Activated naive CD4-positive, alpha-beta T cell treated with anti-CD3 and anti-CD28 coated beads for 36 hours (primary cell): ENCODE measurements at regions of chr12 and their contacts with region 1.

Region 1: GRCh38 chr12:9760699-9761418 is at the start of gene CD69:
- DNase-seq: peak; percentile 88
- H3K4me3 Mint-ChIP-seq: peak within 1 kb of the TSS; percentile 95
- H3K27ac Mint-ChIP-seq: peak within 1 kb of the TSS; percentile 99
- H3K4me1 Mint-ChIP-seq: peaks cover 36% of the 10 kb centered on the region
- H3K27me3 Mint-ChIP-seq: no peaks in the 10 kb centered on the region
- total RNA-seq, gene CD69: 150 to 153 TPM

Region 2: GRCh38 chr12:9673404-9674225 is 87.2 kb before region 1 on chr12:
- CTCF ChIA-PET with region 1: interaction called, 9 read pairs
- intact Hi-C with region 1: loop called (anchors 1 kb)
- DNase-seq: peak; percentile 84
- H3K4me3 Mint-ChIP-seq: peak overlapping the region; percentile 90
- H3K27ac Mint-ChIP-seq: peak overlapping the region; percentile 97
- H3K4me1 Mint-ChIP-seq: peaks cover 35% of the 10 kb centered on the region
- H3K27me3 Mint-ChIP-seq: no peaks in the 10 kb centered on the region

Region 3: GRCh38 chr12:9773216-9773877 is 12.5 kb after region 1 on chr12:
- CTCF ChIA-PET with region 1: interaction called, 3 read pairs
- intact Hi-C with region 1: loop called (anchors 2 kb)
- DNase-seq: no peak
- H3K4me3 Mint-ChIP-seq: peak overlapping the region; percentile 53
- H3K27ac Mint-ChIP-seq: peak overlapping the region; percentile 82
- H3K4me1 Mint-ChIP-seq: peaks cover 86% of the 10 kb centered on the region
- H3K27me3 Mint-ChIP-seq: no peaks in the 10 kb centered on the region

Region 4: GRCh38 chr12:9831720-9832119 is 70.9 kb after region 1 on chr12:
- CTCF ChIA-PET with region 1: no interaction called
- intact Hi-C with region 1: no loop called
- DNase-seq: no peak
- H3K4me3 Mint-ChIP-seq: no peak overlapping the region
- H3K27ac Mint-ChIP-seq: no peak overlapping the region
- H3K4me1 Mint-ChIP-seq: no peaks in the 10 kb centered on the region
- H3K27me3 Mint-ChIP-seq: no peaks in the 10 kb centered on the region

Region 5: GRCh38 chr12:9977916-9978315 is 217.1 kb after region 1 on chr12:
- CTCF ChIA-PET with region 1: no interaction called
- intact Hi-C with region 1: no loop called
- DNase-seq: no peak
- H3K4me3 Mint-ChIP-seq: no peak overlapping the region
- H3K27ac Mint-ChIP-seq: no peak overlapping the region
- H3K4me1 Mint-ChIP-seq: no peaks in the 10 kb centered on the region
- H3K27me3 Mint-ChIP-seq: peaks cover 3% of the 10 kb centered on the region